ENCODE measurements at regions of chr21 and their contacts with region 1.

Region 1: GRCh38 chr21:34526618-34527290 is 14.7 kb upstream of the KCNE1 start:
- DNase-seq: peak; percentile 67 to 75
- ATAC-seq: peak; percentile 79 to 91 (median 89)
- H3K4me3 ChIP-seq: peak overlapping the region; percentile 55
- H3K27ac ChIP-seq: peak overlapping the region; percentile 64
- H3K4me1 ChIP-seq: peaks cover 11% of the 10 kb centered on the region
- H3K27me3 ChIP-seq: no peaks in the 10 kb centered on the region
- CTCF ChIP-seq: no peak

Region 2: DNA sequence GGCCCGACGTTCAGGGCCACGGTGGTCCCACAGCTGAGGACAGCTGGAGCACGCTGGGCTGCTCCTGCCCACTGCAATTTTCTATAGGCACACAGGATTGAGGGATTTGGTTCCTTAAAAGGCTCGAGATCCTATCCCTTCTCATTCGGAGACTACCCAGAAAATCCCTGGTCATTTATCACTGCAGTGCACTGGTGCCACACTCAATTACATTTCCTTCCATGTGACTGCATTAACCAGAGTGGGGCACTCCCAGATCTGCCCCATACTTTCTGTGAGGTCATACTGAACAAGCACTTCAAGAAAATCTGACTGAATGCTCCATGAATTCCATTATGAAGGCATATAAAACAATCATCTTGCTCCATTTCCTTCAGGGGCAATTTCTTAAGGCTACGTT is 35.1 kb after region 1 on chr21:
- intact Hi-C with region 1: loop called in 1 of 2 experiments (anchors 5 kb)
- DNase-seq: no peak
- ATAC-seq: no peak
- H3K4me3 ChIP-seq: no peak overlapping the region
- H3K27ac ChIP-seq: no peak overlapping the region
- H3K4me1 ChIP-seq: no peaks in the 10 kb centered on the region
- H3K27me3 ChIP-seq: no peaks in the 10 kb centered on the region
- CTCF ChIP-seq: no peak

Region 3: DNA sequence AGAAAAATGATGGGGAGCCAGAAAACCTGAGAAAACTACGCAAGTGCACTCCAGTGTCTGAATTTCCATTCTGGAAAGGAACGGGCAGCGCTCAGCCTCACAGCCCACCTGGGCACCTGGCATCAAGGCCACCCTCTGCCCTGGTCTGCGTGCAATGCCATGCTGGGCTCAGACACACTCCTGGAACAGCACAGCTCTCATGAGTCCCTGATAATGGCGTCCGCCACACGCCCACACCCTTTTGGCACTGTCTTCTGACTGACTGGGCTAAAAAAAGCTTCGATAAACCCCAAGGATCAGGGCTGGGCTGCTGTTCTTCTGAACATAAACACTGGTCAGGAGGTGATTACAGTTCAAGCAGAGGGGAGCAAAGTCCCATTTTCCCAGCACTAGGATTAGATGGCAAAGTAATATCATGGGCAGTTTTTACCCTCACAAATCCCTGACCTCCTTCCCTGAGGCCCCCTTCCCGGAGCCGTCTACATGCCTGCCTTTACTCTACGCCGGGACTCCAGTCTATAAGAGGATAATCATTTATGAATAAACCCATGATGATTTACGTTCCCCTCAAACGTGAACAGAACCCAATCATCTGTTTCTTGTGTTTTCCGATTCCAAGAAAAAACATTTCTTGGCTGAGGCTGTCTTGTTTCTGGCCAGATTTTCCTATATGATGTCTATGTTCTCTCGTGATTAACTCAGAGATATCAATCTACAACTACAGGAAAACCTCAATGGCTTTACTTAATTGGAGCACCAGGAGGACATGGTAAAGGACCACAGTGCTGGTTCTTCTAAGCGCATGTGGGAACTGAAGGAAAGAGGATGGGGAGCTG is 65.6 kb after region 1 on chr21:
- intact Hi-C with region 1: loop called in 1 of 2 experiments (anchors 5 kb)
- DNase-seq: peak in 1 of 2 donors; percentile 27
- ATAC-seq: peak; percentile 47 to 90 (median 82)
- H3K4me3 ChIP-seq: peak overlapping the region; percentile 39
- H3K27ac ChIP-seq: peak overlapping the region; percentile 4
- H3K4me1 ChIP-seq: peaks cover 25% of the 10 kb centered on the region
- H3K27me3 ChIP-seq: no peaks in the 10 kb centered on the region
- CTCF ChIP-seq: no peak

Measured in psoas muscle (tissue), 8 donors.